ENCODE measurements at regions of chr15 and their contacts with region 1.

Region 1: GRCh38 chr15:59247364-59247763 is 40.7 kb downstream of the LDHAL6B start:
- DNase-seq: peak; percentile 73 to 86
- ATAC-seq: peak; percentile 75 to 88; a peak in 5 of 6 replicates
- H3K4me3 ChIP-seq: no peak overlapping the region
- H3K27ac ChIP-seq: peak overlapping the region; percentile 53 to 87
- H3K4me1 ChIP-seq: peaks cover 93% of the 10 kb centered on the region
- CTCF ChIP-seq: peak; percentile 79
- EP300 ChIP-seq: no peak
- POLR2A ChIP-seq: no peak
- RAD21 ChIP-seq: peak; percentile 79 to 81

Region 2: DNA sequence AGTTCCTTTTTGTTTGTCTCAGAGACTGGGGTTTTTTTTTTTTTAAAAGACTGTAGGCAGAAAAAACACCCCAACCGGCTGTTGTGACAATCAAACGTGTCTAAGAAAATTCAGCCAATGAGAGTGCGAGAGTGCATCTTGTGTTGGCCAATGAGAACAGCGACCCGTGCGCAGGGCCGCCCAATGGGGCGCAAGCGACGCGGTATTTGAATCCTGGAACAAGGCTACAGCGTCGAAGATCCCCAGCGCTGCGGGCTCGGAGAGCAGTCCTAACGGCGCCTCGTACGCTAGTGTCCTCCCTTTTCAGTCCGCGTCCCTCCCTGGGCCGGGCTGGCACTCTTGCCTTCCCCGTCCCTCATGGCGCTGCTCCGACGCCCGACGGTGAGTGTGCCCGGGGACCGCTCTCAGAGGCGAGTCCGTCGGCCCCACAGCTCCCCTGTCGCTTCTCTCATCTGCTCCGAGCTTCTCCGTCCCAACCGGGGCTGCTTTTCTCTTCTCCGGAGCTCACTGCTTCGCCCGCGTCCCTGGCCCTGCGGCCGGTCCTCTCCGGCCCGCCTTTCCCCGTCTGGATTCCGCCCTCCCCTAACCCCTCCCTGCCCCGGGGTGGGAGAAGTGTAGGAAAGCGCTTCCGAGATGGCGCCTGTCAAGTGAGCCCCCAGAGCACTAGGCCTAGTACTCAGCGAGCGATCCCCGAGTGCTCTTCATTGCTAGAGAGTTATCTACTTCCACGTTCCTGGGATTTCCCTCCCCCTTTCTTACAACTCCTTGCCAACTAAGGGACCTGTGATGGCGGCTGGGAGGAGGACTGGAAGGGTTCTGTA is 142.2 kb before region 1 on chr15 and contains the start of gene CCNB2:
- CTCF ChIA-PET with region 1: no interaction called
- POLR2A ChIA-PET with region 1: no interaction called
- DNase-seq: peak; percentile 96 to 99
- ATAC-seq: peak; percentile 97 to 99
- H3K4me3 ChIP-seq: peak within 1 kb of the TSS; percentile 82
- H3K27ac ChIP-seq: peak within 1 kb of the TSS; percentile 83 to 91
- H3K4me1 ChIP-seq: peaks cover 9% of the 10 kb centered on the region; the same call in 2 of the 3 replicates
- CTCF ChIP-seq: no peak
- EP300 ChIP-seq: no peak
- POLR2A ChIP-seq: peak; percentile 71
- RAD21 ChIP-seq: no peak
- polyA plus RNA-seq, gene CCNB2: 121 and 144 TPM in 2 replicates

Region 3: GRCh38 chr15:59283717-59284336 is 36.5 kb after region 1 on chr15:
- CTCF ChIA-PET with region 1: interaction called, 37 read pairs
- POLR2A ChIA-PET with region 1: no interaction called
- DNase-seq: peak; percentile 99
- ATAC-seq: peak; percentile 91
- H3K4me3 ChIP-seq: 0 out of 3 replicates have a peak overlapping the region, but pooled peaks have one; percentile 8
- H3K27ac ChIP-seq: peak overlapping the region; percentile 93
- H3K4me1 ChIP-seq: peaks cover 84% of the 10 kb centered on the region
- CTCF ChIP-seq: no peak
- EP300 ChIP-seq: peak; percentile 98 to 99
- POLR2A ChIP-seq: peak; percentile 36
- RAD21 ChIP-seq: peak; percentile 43 to 81

Region 4: DNA sequence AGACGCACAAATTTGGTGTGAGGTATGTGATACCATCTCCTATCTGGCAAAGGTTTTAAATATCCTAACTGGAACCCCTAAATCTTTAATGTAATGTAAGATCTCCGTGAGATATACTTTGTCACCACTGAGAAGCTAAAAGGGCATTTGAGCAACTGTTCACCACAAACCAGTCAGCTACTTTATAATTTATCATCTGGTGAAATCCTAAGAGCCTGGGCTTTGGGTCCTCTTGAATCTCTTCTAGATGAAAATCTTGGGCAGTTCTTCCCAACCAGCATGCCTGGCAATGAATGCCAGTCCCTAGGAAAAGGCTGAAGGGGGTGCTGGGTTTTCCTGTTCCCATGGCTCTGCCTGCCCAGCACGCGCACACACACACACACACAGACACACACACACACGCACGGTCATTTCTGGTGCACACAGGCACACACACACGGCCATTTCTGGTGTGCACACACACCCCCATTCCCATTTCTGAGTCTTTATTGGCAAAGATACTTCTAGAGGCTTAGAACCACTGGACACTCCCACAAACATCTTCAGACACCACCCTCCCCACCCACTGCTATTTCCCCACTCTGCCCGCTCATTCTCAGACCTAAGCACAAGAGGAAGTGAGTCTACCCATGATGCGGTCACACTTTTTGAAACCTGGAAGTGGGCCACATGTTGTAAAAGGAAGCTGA is 52.7 kb after region 1 on chr15:
- CTCF ChIA-PET with region 1: interaction called, 14 read pairs
- POLR2A ChIA-PET with region 1: no interaction called
- DNase-seq: peak; percentile 91 to 97
- ATAC-seq: peak; percentile 84 to 87
- H3K4me3 ChIP-seq: peak overlapping the region; percentile 18
- H3K27ac ChIP-seq: peak overlapping the region; percentile 93 to 95
- H3K4me1 ChIP-seq: peaks cover 100% of the 10 kb centered on the region
- CTCF ChIP-seq: no peak
- EP300 ChIP-seq: peak; percentile 67 to 82; a peak in 3 of 5 replicates
- POLR2A ChIP-seq: no peak; the same call in 1 of the 2 replicates
- RAD21 ChIP-seq: peak; percentile 17 to 46; a peak in 4 of 5 replicates

Region 5: DNA sequence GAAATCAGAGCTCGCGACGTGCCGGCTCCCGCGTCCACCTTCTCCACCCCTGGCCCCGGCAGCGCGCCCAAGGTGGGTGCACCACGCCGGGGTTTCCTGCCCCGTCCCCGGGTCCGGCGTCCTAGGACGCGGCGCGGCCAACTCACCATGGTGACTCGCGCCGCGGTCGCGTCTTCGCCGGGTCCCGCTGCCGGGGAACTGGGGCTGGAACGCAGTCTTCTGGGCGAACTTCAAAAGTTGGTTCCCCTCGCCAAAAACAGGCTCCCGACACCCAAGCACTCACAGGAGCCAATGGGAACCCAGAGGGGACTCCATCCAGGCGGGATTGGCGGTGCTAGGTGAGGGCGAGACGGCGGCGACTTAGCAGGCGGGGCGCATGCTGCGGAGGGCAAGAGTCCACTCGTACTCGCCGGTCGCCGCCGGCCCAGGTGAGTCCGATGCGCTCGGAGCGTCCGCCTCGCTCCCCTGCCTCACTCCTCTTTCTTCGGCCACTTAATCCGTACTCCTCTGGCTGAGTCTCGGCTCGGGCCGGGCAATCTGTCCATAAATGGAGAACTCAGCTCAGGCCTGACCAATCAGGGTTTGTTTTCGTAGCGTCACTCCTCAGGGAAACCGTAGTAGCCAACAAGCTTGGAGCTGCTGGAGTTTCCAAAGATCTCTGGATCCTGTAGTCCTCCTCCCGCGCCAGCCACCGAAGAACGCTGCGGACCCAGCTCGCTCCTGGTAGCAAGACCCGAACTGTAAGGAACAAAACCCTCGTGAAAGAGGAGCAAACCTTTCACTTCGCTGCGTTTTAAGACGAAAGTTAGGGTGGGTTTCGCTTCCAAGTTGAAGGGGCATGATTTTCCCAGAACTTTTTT is 125.2 kb after region 1 on chr15 and contains the start of gene MYO1E:
- CTCF ChIA-PET with region 1: interaction called, 10 read pairs
- POLR2A ChIA-PET with region 1: interaction called, 3 read pairs
- DNase-seq: peak; percentile 98 to 100
- ATAC-seq: peak; percentile 92 to 95
- H3K4me3 ChIP-seq: peak within 1 kb of the TSS; percentile 96
- H3K27ac ChIP-seq: peak within 1 kb of the TSS; percentile 91 to 92
- H3K4me1 ChIP-seq: peaks cover 49% of the 10 kb centered on the region
- CTCF ChIP-seq: no peak
- EP300 ChIP-seq: no peak
- POLR2A ChIP-seq: peak; percentile 98
- RAD21 ChIP-seq: peak; percentile 18 to 39; a peak in 2 of 5 replicates
- polyA plus RNA-seq, gene MYO1E: 451 and 497 TPM in 2 replicates

Measured in A549 (cell line).